A549 (cell line): ENCODE measurements at regions of chr4 and their contacts with region 1.

Region 1: GRCh38 chr4:166165829-166166420 is 292.9 kb downstream of the TLL1 start:
- DNase-seq: peak; percentile 16 to 69
- ATAC-seq: peak; percentile 89
- H3K4me3 ChIP-seq: no peak overlapping the region
- H3K27ac ChIP-seq: no peak overlapping the region; a peak in 1 of 6 replicates
- H3K4me1 ChIP-seq: no peaks in the 10 kb centered on the region
- CTCF ChIP-seq: peak; percentile 68
- EP300 ChIP-seq: no peak
- POLR2A ChIP-seq: no peak
- RAD21 ChIP-seq: peak; percentile 83 to 85

Region 2: GRCh38 chr4:166594326-166594946 is 428.5 kb after region 1 on chr4:
- CTCF ChIA-PET with region 1: interaction called, 31 read pairs
- POLR2A ChIA-PET with region 1: no interaction called
- DNase-seq: peak; percentile 15 to 42
- ATAC-seq: peak; percentile 84 to 87; a peak in 5 of 6 replicates
- H3K4me3 ChIP-seq: no peak overlapping the region
- H3K27ac ChIP-seq: no peak overlapping the region
- H3K4me1 ChIP-seq: no peaks in the 10 kb centered on the region
- CTCF ChIP-seq: peak; percentile 51
- EP300 ChIP-seq: no peak
- POLR2A ChIP-seq: no peak
- RAD21 ChIP-seq: peak; percentile 72 to 75